ENCODE measurements at regions of chr5 and their contacts with region 1.

Region 1: DNA sequence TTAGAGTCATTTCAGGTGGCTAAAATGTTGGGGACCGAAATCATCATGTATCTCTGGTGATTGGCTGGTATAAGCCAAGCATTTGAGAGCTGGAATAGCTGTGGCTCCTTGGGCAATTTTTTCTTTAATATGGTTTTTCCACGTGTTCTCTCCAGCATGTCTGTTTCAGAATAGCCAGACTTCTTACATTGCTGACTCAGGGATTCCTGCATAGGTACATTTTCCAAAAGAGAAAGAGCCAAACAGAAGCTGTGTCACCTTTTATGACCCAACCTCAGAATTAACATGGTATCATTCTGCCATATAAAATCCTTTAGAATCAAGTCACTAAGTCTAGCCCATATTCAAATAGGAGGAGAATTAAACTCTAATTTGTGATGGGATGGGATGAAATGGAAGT is 74.8 kb upstream of the TSLP start:
- DNase-seq: no peak
- H3K4me3 Mint-ChIP-seq: no peak overlapping the region
- H3K27ac Mint-ChIP-seq: no peak overlapping the region
- H3K4me1 Mint-ChIP-seq: no peaks in the 10 kb centered on the region
- H3K27me3 Mint-ChIP-seq: peaks cover 2% of the 10 kb centered on the region

Region 2: GRCh38 chr5:110965773-110966581 is 30.8 kb before region 1 on chr5:
- intact Hi-C with region 1: no loop called
- DNase-seq: no peak
- H3K4me3 Mint-ChIP-seq: no peak overlapping the region
- H3K27ac Mint-ChIP-seq: no peak overlapping the region
- H3K4me1 Mint-ChIP-seq: no peaks in the 10 kb centered on the region
- H3K27me3 Mint-ChIP-seq: no peaks in the 10 kb centered on the region

Region 3: DNA sequence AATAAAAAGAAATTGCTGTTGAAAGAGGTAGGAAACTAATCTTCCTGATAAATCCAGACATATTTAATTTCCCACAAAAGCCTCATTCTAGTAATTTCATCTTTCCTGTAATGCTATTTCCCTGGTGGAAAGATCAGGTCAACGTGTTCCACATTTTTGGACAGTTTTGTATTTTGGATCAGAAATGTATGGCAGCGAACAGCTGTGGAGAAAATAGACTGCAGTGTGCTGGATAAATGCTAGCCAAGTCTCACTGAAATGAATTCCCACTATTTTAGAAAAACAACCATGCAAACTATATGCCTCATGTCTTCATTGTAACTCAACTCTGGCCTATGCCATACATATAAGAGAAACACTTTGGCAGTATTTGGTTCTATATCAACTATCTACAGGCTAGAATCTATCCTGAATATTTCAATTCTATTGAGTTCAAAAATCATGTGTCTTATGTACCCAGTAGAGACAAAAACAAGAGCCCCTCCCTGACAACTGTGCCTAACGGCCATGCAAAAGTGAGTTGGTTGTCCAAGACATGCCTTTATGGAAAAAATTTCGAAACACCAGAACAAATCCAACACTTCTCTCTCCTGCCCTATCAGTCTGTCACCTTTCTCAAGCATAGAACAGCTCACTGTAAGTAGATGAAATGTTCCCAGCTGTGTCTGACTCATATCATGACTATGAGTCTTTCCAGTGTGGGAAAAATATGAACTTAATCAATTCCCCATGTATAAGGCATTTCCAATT is 951.5 kb after region 1 on chr5:
- intact Hi-C with region 1: loop called (anchors 5 kb)
- DNase-seq: no peak
- H3K4me3 Mint-ChIP-seq: no peak overlapping the region
- H3K27ac Mint-ChIP-seq: no peak overlapping the region
- H3K4me1 Mint-ChIP-seq: no peaks in the 10 kb centered on the region
- H3K27me3 Mint-ChIP-seq: peaks cover 4% of the 10 kb centered on the region

Measured in activated T-helper 1 cell treated with anti-CD3 and anti-CD28 coated beads, Interleukin-12 subunit alpha, Interleukin-12 subunit beta, Interleukin-2, Interleukin-4 antibody, amounts not matched to agents 30 ng/mL and 10 ng/mL and 1 ng/mL, durations not matched to agents 14 hours and 24 hours and 36 hours (primary cell).